MCF 10A (cell line): ENCODE measurements at regions of chr1 and their contacts with region 1.

Region 1: GRCh38 chr1:169133801-169134502 is 27.5 kb downstream of the ATP1B1 start:
- DNase-seq: peak; percentile 32
- H3K4me3 Mint-ChIP-seq: no peak overlapping the region
- H3K27ac Mint-ChIP-seq: no peak overlapping the region
- H3K4me1 Mint-ChIP-seq: peaks cover 24% of the 10 kb centered on the region
- H3K27me3 Mint-ChIP-seq: no peaks in the 10 kb centered on the region
- CTCF ChIP-seq: peak; percentile 35

Region 2: GRCh38 chr1:169115891-169116585 is 17.9 kb before region 1 on chr1:
- CTCF ChIA-PET with region 1: interaction called, 11 read pairs
- POLR2A ChIA-PET with region 1: interaction called, 4 read pairs
- intact Hi-C with region 1: no loop called
- DNase-seq: no peak
- H3K4me3 Mint-ChIP-seq: no peak overlapping the region
- H3K27ac Mint-ChIP-seq: peak overlapping the region; percentile 49
- H3K4me1 Mint-ChIP-seq: peaks cover 60% of the 10 kb centered on the region
- H3K27me3 Mint-ChIP-seq: no peaks in the 10 kb centered on the region
- CTCF ChIP-seq: no peak